RWPE1 (cell line): ENCODE measurements at regions of chr5 and their contacts with region 1.

Region 1: DNA sequence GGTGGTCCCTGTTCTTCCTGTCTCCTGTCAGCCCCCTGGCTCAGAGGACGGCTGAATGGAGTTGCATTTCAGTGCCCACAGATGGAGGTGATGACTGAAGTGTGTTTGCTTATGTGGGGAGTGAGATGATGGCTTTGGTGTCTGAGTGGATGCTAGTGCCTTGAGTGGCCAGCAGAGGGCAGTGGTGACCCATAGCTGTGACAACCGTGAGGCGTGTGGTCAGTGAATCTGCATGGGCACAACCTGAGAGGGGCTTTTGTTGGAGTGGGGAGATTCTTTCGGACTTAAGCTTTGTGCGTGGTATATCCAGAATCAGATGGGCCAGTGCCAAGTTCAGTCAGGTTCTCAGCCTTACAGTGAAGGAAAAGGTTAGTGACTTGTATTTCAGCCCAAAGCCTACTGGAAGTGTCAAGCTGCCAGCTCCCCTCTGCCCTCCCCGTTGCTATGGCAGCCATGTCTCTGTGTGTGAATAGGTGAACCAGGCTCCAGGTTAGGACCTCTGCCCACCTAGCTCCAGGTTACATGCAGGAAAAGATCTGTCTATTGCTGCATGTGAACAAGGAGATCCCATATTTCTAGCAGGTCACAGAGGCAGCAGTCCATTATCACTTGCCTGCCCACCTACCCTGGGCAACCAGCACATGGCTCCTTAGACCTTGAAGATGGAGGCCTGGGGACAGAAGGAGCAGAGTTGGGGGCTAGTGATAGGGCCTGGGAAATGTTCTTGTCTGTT is 14.7 kb upstream of the CXXC5 start:
- DNase-seq: peak; percentile 84
- H3K27ac ChIP-seq: peak overlapping the region; percentile 16
- CTCF ChIP-seq: peak; percentile 99

Region 2: DNA sequence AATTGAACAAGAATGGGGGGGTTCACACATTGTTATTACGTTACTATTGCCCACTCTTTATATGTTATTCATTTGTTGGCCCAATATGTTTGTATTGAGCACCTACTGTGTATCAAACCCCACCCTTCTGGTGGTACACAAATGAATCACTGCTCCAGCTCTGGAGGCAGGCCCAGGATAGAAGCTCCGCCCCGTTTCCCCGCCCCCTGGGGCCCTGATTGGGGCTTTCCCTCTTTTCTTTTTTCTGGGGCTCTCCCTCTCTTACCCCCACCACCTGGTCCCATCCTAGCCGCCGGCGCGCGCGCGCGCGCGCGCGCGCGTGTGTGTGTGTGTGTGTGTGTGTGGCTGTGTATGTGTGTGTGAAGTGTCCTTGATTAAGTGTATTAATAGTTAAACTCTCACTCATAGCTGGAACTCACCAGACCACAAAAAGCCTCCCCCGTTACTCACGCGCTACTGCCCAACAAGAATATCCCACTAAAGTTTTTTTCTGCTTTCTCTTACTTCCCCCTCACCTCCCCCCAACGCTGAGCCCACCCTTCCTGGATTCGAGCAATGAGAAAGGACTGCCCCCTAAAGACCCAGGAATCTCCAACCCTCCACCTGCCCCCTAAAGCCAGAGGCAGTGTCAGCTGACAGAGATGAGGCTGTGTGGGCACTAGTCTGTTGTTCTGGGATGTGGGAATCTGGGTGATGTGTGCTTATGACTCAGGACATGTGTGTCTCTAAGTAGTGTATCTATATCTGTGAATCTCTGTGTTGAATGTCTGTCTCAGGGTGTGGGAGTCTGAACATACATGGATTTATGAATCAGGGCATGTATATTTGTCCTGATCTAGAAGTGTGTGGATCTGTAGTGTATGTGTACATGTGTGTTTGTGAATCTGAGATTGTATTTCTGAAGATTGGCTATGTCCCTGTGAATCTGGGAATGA is 18.7 kb after region 1 on chr5:
- CTCF ChIA-PET with region 1: interaction called, 27 read pairs
- POLR2A ChIA-PET with region 1: interaction called, 5 read pairs
- DNase-seq: peak; percentile 94
- H3K27ac ChIP-seq: peak overlapping the region; percentile 25; the same call in 1 of the 2 replicates
- CTCF ChIP-seq: no peak

Region 3: GRCh38 chr5:139660923-139661814 is 27.7 kb after region 1 on chr5:
- CTCF ChIA-PET with region 1: interaction called, 13 read pairs
- POLR2A ChIA-PET with region 1: interaction called, 3 read pairs
- DNase-seq: peak; percentile 96
- H3K27ac ChIP-seq: peak overlapping the region; percentile 94
- CTCF ChIP-seq: no peak

Region 4: GRCh38 chr5:139684881-139685749 is 51.7 kb after region 1 on chr5:
- CTCF ChIA-PET with region 1: interaction called, 125 read pairs
- POLR2A ChIA-PET with region 1: no interaction called
- DNase-seq: no peak
- H3K27ac ChIP-seq: no peak overlapping the region
- CTCF ChIP-seq: no peak

Region 5: GRCh38 chr5:139690064-139690802 is 56.8 kb after region 1 on chr5:
- CTCF ChIA-PET with region 1: interaction called, 125 read pairs
- POLR2A ChIA-PET with region 1: no interaction called
- DNase-seq: peak; percentile 67
- H3K27ac ChIP-seq: no peak overlapping the region
- CTCF ChIP-seq: peak; percentile 79

Region 6: GRCh38 chr5:139745800-139746690 is 112.6 kb after region 1 on chr5:
- CTCF ChIA-PET with region 1: interaction called, 10 read pairs
- POLR2A ChIA-PET with region 1: no interaction called
- DNase-seq: peak; percentile 97
- H3K27ac ChIP-seq: no peak overlapping the region
- CTCF ChIP-seq: no peak